ENCODE measurements at regions of chr12 and their contacts with region 1.

Region 1: GRCh38 chr12:51083126-51083833 is at the start of gene CSRNP2:
- DNase-seq: peak; percentile 99
- H3K4me3 ChIP-seq: peak within 1 kb of the TSS; percentile 90 to 99 (median 93)
- H3K27ac ChIP-seq: peak within 1 kb of the TSS; percentile 97 to 99 (median 98)
- H3K4me1 ChIP-seq: peaks cover 0 to 29% (median 18%) of the 10 kb centered on the region in 4 donors
- H3K27me3 ChIP-seq: no peaks in the 10 kb centered on the region
- CTCF ChIP-seq: no peak
- EP300 ChIP-seq: peak in 1 of 4 donors; percentile 16
- POLR2A ChIP-seq: peak; percentile 92 to 95
- total RNA-seq, gene CSRNP2: 17.4 to 23.9 (median 20.6) TPM

Region 2: DNA sequence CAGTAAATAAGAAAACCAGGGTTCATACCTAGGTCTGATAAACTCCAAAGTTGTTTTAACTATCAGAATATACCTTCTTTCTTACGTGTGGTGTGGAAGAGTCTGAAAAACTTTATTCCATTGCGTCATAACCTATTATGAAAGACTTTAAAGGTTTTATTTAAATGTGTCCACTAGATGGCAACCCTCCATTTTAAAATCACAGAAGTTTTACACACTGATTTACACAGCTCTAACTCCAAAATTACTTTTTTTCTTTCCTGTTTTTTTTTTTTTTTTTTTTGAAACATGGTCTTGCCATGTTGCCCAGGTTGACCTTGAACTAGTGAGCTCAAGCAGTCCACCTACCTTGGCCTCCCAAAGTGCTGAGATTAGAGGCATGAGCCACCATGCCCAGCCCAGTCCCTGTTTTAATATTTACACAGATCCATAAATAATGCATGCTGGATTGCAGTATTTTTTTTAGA is 257.9 kb before region 1 on chr12:
- intact Hi-C with region 1: loop called (anchors 10 kb)
- DNase-seq: no peak
- H3K4me3 ChIP-seq: no peak overlapping the region
- H3K27ac ChIP-seq: peak overlapping the region; percentile 50 to 71 (median 66)
- H3K4me1 ChIP-seq: peaks cover 0 to 14% (median 9%) of the 10 kb centered on the region in 4 donors
- H3K27me3 ChIP-seq: no peaks in the 10 kb centered on the region
- CTCF ChIP-seq: peak; percentile 38 to 64 (median 49)
- EP300 ChIP-seq: no peak
- POLR2A ChIP-seq: no peak

Region 3: GRCh38 chr12:51172515-51173431 is 89.5 kb after region 1 on chr12 and contains the start of gene TFCP2:
- intact Hi-C with region 1: loop called (anchors 2 kb)
- DNase-seq: peak; percentile 99
- H3K4me3 ChIP-seq: peak within 1 kb of the TSS; percentile 64 to 86 (median 75)
- H3K27ac ChIP-seq: peak within 1 kb of the TSS; percentile 93 to 98 (median 96)
- H3K4me1 ChIP-seq: peaks cover 0 to 27% (median 18%) of the 10 kb centered on the region in 4 donors
- H3K27me3 ChIP-seq: no peaks in the 10 kb centered on the region
- CTCF ChIP-seq: no peak
- EP300 ChIP-seq: peak in 1 of 4 donors; percentile 13
- POLR2A ChIP-seq: peak; percentile 43 to 62
- total RNA-seq, gene TFCP2: 11.9 to 17.8 (median 13.7) TPM

Region 4: GRCh38 chr12:51192284-51192671 is 109.0 kb after region 1 on chr12:
- intact Hi-C with region 1: no loop called
- DNase-seq: no peak
- H3K4me3 ChIP-seq: no peak overlapping the region
- H3K27ac ChIP-seq: no peak overlapping the region
- H3K4me1 ChIP-seq: no peaks in the 10 kb centered on the region
- H3K27me3 ChIP-seq: no peaks in the 10 kb centered on the region
- CTCF ChIP-seq: no peak
- EP300 ChIP-seq: no peak
- POLR2A ChIP-seq: no peak

Region 5: DNA sequence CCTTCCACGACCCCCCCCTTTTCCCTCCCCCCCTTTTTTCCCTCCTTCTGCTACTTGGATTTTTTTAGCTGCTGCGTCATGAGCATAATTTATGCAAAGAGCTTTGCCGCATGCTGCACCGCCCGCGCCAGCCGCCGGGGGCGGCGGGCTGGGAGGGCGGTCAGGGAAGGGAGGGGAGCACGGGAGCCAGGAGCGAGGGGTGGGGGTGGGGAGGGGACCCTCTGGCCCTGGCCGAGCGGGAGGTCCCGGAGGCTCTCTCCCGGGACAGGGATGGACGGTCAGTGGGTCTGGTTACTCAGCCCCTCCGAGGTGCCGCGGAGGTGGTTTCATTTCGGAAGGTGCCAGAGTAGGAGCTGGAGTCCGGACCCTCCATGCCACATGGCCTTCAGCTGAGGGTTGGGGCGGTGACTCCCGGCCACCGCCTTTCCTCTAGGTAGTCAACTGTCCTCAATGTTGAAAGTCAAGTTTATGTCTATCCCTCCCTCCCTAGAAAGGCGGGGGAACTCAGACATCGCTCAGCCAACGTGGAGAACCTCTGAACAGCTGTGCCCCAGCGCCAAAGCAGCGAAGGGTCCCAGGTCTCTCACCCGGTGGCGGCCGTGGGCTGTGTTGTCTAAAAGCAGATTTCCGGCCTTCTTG is 134.8 kb after region 1 on chr12 and contains the start of gene POU6F1:
- intact Hi-C with region 1: loop called (anchors 2 kb)
- DNase-seq: peak; percentile 88
- H3K4me3 ChIP-seq: peak within 1 kb of the TSS; percentile 89 to 98 (median 94)
- H3K27ac ChIP-seq: peak within 1 kb of the TSS; percentile 98 to 100 (median 99)
- H3K4me1 ChIP-seq: peaks cover 0 to 25% (median 16%) of the 10 kb centered on the region in 4 donors
- H3K27me3 ChIP-seq: no peaks in the 10 kb centered on the region
- CTCF ChIP-seq: peak; percentile 23 to 80 (median 44)
- EP300 ChIP-seq: no peak
- POLR2A ChIP-seq: peak in 1 of 2 donors; percentile 16
- total RNA-seq, gene POU6F1: 5.8 to 15.8 (median 8.5) TPM

Region 6: DNA sequence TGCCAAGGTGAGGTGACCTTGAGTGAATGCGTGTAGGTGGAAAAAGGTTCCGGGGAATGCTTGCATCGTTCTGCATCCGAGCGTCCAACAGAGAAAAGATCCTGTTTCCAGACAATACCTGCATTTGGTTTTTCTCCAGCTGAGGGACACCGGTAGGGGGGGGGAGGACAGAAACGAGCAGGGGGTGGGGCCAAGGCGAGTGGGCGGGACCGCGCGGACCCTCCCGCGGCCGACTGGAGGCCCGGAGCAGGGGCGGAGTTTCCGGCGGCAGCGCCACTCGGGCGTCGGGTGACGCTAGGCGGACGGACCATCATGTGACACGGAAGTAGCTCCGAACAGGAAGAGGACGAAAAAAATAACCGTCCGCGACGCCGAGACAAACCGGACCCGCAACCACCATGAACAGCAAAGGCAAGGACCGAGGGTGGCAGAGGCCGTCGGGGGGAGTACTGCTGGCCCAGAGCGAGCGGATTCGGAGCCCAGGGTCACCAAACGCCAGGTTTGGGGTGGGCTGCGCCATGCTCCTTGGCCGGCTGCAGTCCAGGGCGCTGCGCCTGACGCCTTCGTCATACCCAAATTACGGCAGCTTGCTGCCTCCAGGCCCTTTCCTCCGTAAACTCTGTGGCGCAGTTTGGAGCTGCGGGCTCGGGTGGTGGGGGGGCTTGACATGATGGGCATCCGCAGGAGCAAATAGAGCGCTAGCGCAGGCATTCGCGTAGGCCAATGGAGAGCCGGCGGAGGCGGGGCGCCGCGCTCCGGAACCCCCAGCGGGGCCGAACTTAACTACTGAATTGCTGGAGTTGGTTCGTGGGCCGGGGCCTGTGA is 155.4 kb after region 1 on chr12 and contains the start of gene DAZAP2:
- intact Hi-C with region 1: loop called (anchors 2 kb)
- DNase-seq: peak; percentile 98
- H3K4me3 ChIP-seq: peak within 1 kb of the TSS; percentile 96 to 100 (median 97)
- H3K27ac ChIP-seq: peak within 1 kb of the TSS; percentile 99 to 100 (median 100)
- H3K4me1 ChIP-seq: peaks cover 0 to 28% (median 22%) of the 10 kb centered on the region in 4 donors
- H3K27me3 ChIP-seq: no peaks in the 10 kb centered on the region
- CTCF ChIP-seq: peak in 2 of 4 experiments; percentile 28 to 39
- EP300 ChIP-seq: peak in 1 of 4 donors; percentile 36
- POLR2A ChIP-seq: peak; percentile 94
- total RNA-seq, gene DAZAP2: 107 to 265 (median 191) TPM

Measured in sigmoid colon (tissue), 7 donors.